ENCODE measurements at regions of chr2 and their contacts with region 1.

Region 1: DNA sequence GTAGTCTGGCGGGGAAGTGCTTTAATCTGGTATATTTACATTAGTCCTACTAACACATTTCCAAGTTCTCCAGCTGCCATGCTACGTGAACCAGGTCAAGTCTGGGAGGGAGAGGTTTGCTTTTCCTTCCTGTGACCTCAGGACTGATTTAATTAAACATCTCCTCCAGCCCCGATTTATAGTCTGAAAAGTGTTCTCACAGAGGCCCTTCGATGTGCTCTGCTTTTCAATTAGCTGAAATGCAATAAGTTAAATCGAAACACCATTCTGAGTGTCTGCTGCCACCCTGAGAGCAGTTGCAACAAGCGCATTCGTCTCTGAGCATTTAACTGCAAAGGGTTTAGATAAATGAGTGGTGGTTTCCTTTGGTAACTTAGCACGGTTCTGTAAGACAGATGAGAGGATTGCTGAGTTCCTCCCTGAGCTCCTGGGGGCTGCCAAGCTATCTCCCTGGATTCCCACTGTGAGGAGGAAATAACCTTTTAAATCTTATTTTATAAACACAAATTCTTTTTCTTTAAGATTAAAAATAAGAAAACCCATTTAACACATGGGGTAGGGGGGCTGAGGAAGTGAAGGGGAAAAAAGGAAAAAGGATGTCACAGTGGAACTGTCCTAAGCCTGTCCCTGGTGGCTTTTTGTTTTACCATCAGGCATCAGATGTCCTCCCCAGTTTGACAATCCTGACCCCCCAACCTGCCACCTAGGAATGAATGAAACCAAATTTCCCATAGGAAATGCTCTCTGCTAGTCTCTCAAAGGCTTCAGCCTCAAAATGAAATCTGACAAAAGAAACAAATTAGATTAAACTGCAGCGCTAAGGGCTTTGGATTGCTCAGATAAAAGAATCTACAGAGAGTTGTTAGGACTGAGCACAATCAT is 56.5 kb upstream of the CREB1 start:
- DNase-seq: peak; percentile 30
- ATAC-seq: peak; percentile 73
- H3K4me3 ChIP-seq: peak overlapping the region; percentile 6 to 19 (median 15); a peak in 2 of 6 replicates
- H3K27ac ChIP-seq: no peak overlapping the region
- H3K4me1 ChIP-seq: peaks cover 11% of the 10 kb centered on the region
- H3K27me3 ChIP-seq: no peaks in the 10 kb centered on the region
- CTCF ChIP-seq: peak; percentile 58
- EP300 ChIP-seq: no peak
- POLR2A ChIP-seq: no peak
- RAD21 ChIP-seq: no peak

Region 2: DNA sequence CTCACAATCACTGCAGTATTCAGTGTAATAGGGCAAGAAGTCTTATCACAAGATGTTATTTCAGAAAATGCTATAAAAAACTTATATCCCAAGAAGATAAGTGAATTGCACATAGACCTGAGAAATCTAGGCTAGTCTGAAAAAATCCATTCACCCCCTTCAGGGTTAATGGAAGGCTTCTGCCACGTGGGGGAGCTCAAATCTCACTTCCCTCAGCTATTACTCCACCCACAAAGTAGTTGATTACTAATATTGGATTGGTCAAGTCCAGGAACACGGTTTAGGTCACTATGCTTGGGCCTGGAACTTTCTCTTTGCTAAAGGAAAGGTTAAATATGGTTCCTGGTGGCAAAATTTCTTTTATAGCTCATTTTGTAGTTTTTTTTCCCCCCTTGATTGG is 1081.2 kb before region 1 on chr2:
- CTCF ChIA-PET with region 1: no interaction called
- POLR2A ChIA-PET with region 1: no interaction called
- in situ Hi-C with region 1: no loop called
- intact Hi-C with region 1: loop called (anchors 1 kb)
- DNase-seq: peak; percentile 62
- ATAC-seq: peak; percentile 98
- H3K4me3 ChIP-seq: no peak overlapping the region
- H3K27ac ChIP-seq: no peak overlapping the region
- H3K4me1 ChIP-seq: no peaks in the 10 kb centered on the region
- H3K27me3 ChIP-seq: no peaks in the 10 kb centered on the region
- CTCF ChIP-seq: peak; percentile 75
- EP300 ChIP-seq: no peak
- POLR2A ChIP-seq: no peak
- RAD21 ChIP-seq: peak; percentile 70

Region 3: DNA sequence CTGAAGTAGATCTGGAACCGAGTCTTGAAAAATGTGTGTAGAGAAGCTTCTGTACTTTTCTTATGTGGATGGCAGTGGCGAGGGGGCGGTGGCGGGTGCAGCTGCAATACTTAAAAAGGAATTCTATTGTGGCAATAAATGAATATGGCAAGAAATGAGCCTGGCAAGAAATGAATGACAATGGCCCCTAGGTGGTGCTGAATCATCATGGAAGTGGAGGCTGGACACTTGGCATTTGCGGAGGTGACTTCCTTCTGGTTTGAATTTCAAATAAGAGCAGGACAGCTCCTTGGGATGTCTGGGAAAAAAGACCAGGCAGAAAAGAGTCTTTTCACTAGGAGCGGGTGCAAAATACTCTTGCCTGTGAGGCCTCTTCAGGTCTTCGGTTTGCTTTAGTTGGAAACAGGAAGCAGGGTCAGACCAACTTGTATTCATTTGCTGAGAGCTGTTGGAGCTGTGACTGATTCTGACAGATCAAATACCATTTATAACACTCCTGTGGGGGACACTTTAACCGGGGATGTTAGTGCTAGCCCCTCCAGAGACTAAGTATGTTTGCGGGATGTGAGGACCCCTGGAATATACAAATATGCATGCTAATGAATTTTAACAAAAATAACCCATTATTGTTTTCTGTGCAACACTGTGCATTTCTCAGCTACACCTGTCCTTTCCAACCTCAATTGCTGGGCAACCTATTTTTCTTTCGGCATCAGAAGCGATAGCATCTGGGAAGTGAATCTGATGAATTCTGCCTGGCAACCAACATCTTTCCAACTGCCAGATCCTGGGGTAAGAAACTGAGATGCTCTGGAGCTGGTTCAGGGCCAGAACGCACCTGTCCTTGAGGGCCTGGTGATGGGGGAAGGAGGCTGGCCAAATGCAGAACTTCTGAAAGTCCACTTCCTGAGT is 672.5 kb before region 1 on chr2:
- CTCF ChIA-PET with region 1: interaction called, 24 read pairs
- POLR2A ChIA-PET with region 1: no interaction called
- in situ Hi-C with region 1: loop called (anchors 5 kb)
- intact Hi-C with region 1: loop called (anchors 1 kb)
- DNase-seq: peak; percentile 65
- ATAC-seq: peak; percentile 79
- H3K4me3 ChIP-seq: no peak overlapping the region
- H3K27ac ChIP-seq: no peak overlapping the region
- H3K4me1 ChIP-seq: no peaks in the 10 kb centered on the region
- H3K27me3 ChIP-seq: no peaks in the 10 kb centered on the region
- CTCF ChIP-seq: peak; percentile 88
- EP300 ChIP-seq: no peak
- POLR2A ChIP-seq: no peak
- RAD21 ChIP-seq: peak; percentile 89

Region 4: DNA sequence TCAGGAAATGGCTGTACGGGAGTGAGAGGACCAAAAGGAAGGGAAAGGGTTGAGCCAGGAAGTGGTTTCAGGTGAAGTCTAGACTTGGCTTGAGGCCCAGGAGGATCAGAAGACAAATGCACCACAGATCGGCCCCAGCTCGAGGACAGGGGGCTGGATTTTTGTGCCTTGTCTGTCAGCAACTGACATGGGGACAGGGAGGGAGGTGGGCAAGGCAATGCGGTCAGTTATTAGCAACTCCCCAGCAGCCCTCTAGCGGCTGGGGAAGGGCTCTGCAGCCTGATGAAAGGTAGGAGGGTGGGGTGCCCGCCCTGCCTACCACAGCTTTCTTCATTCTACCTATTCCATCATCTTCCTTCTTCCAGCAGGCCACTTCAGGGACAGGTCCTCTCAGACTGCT is 484.0 kb before region 1 on chr2:
- CTCF ChIA-PET with region 1: interaction called, 5 read pairs
- POLR2A ChIA-PET with region 1: no interaction called
- in situ Hi-C with region 1: loop called (anchors 5 kb)
- intact Hi-C with region 1: loop called (anchors 2 kb)
- DNase-seq: peak; percentile 49
- ATAC-seq: peak; percentile 100
- H3K4me3 ChIP-seq: no peak overlapping the region
- H3K27ac ChIP-seq: no peak overlapping the region
- H3K4me1 ChIP-seq: no peaks in the 10 kb centered on the region
- H3K27me3 ChIP-seq: no peaks in the 10 kb centered on the region
- CTCF ChIP-seq: peak; percentile 89
- EP300 ChIP-seq: no peak
- POLR2A ChIP-seq: no peak
- RAD21 ChIP-seq: peak; percentile 70

Region 5: GRCh38 chr2:207341804-207342203 is 131.5 kb before region 1 on chr2:
- CTCF ChIA-PET with region 1: no interaction called
- POLR2A ChIA-PET with region 1: no interaction called
- in situ Hi-C with region 1: no loop called
- intact Hi-C with region 1: loop called (anchors 2 kb)
- DNase-seq: no peak
- ATAC-seq: peak; percentile 68
- H3K4me3 ChIP-seq: no peak overlapping the region
- H3K27ac ChIP-seq: no peak overlapping the region
- H3K4me1 ChIP-seq: no peaks in the 10 kb centered on the region
- H3K27me3 ChIP-seq: no peaks in the 10 kb centered on the region
- CTCF ChIP-seq: peak; percentile 31; the same call in 1 of the 2 replicates
- EP300 ChIP-seq: no peak
- POLR2A ChIP-seq: no peak
- RAD21 ChIP-seq: no peak

Region 6: DNA sequence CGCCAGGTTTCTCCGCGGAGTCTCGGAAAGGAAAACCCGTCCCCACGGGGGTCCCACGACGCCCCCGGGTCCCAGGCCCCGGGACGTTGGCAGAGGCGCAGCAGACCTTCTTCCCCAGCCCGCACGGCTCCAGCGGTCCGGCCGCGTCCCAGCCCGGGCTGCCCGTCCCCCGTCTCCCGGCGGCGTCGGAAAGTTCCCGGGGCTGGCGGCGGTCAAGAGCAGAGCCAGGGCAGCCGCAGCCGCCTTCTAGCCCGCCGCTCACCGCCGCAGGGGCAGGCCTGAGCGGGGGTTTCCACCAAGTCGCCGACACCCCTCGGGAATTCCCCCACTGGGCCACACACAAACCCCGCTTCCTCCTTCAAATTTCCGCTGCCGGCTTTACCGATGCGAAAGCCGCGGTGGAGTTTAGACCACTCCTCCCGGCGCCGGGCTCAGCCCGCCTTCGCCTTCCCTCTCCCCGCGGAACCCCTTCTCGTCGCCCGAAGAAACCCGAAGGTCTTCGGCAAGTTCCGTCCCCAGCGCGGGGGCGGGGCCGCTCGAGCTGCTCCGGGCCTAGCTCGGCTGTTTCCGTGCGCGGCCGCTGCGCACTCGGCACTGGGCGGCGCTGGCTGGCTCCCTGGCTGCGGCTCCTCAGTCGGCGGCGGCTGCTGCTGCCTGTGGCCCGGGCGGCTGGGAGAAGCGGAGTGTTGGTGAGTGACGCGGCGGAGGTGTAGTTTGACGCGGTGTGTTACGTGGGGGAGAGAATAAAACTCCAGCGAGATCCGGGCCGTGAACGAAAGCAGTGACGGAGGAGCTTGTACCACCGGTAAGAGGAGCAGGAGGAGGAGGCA is 56.3 kb after region 1 on chr2 and contains the start of gene CREB1:
- CTCF ChIA-PET with region 1: no interaction called
- POLR2A ChIA-PET with region 1: no interaction called
- in situ Hi-C with region 1: no loop called
- intact Hi-C with region 1: no loop called
- DNase-seq: peak; percentile 94
- ATAC-seq: peak; percentile 96
- H3K4me3 ChIP-seq: peak within 1 kb of the TSS; percentile 93 to 98 (median 94)
- H3K27ac ChIP-seq: peak within 1 kb of the TSS; percentile 96
- H3K4me1 ChIP-seq: peaks cover 44% of the 10 kb centered on the region
- H3K27me3 ChIP-seq: no peaks in the 10 kb centered on the region; a peak in 1 of 5 replicates
- CTCF ChIP-seq: peak; percentile 73
- EP300 ChIP-seq: no peak; a peak in 1 of 4 replicates
- POLR2A ChIP-seq: peak; percentile 90 to 94
- RAD21 ChIP-seq: peak; percentile 30
- total RNA-seq, gene CREB1: 51.9 and 79.5 TPM in 2 replicates

Region 7: GRCh38 chr2:208062113-208062512 is 588.8 kb after region 1 on chr2:
- CTCF ChIA-PET with region 1: no interaction called
- POLR2A ChIA-PET with region 1: no interaction called
- in situ Hi-C with region 1: no loop called
- intact Hi-C with region 1: no loop called
- DNase-seq: peak; percentile 71
- ATAC-seq: peak; percentile 87
- H3K4me3 ChIP-seq: no peak overlapping the region
- H3K27ac ChIP-seq: no peak overlapping the region
- H3K4me1 ChIP-seq: 0 out of 2 replicates have a peak, but pooled peaks cover 4% of the 10 kb centered on the region
- H3K27me3 ChIP-seq: 0 out of 5 replicates have a peak, but pooled peaks cover 0 to 6% of the 10 kb centered on the region in 2 experiments
- CTCF ChIP-seq: peak; percentile 69
- EP300 ChIP-seq: no peak
- POLR2A ChIP-seq: no peak
- RAD21 ChIP-seq: no peak; the same call in 1 of the 2 replicates